Naive thymus-derived CD4-positive, alpha-beta T cell (primary cell): ENCODE measurements at regions of chrX and their contacts with region 1.

Region 1: DNA sequence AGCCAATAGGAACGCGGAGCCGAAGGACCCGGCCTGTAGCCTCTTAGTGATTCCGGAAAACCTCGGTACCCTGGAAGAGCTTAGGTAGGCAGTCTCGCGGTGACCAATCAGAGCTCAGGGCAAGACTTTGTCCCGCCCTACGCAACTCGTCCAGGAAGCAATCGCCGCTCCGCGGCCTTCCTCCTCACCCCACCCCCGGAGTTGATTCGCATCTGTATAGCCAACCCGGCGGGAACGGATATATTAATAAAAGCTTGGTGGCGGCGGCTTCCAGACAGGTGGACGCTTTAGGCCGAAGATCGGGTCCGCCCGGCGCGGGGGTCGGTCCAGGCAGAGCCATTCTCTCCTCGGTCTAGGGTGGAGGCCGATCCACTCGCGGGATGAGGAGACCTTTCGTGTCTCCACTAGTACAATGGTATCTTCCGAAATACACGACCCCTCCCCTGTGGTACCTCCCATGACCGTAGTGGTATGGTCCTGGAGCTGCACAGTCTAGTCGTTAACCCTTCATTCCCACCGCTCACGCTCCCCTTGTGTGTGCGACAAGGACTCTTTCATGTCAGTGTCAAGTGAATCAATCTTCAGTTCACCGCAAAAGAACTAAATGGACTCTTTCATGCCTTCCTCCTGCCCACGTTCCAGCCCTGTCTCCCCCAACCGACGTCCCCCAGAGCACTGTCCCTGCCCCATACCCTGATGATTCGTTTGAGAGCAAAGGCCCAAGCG is 24.2 kb upstream of the GLOD5 start:
- DNase-seq: peak; percentile 55 to 94 (median 89)
- ATAC-seq: peak; percentile 98
- H3K4me3 ChIP-seq: peak overlapping the region; percentile 81
- H3K4me3 Mint-ChIP-seq: peak overlapping the region; percentile 79 to 98 (median 94)
- H3K27ac ChIP-seq: peak overlapping the region; percentile 91
- H3K27ac Mint-ChIP-seq: peak overlapping the region; percentile 90 to 99 (median 96)
- H3K4me1 ChIP-seq: peaks cover 12 to 14% of the 10 kb centered on the region in 2 donors
- H3K4me1 Mint-ChIP-seq: peaks cover 8 to 31% (median 24%) of the 10 kb centered on the region in 7 donors
- H3K27me3 ChIP-seq: no peaks in the 10 kb centered on the region
- H3K27me3 Mint-ChIP-seq: no peaks in the 10 kb centered on the region

Region 2: DNA sequence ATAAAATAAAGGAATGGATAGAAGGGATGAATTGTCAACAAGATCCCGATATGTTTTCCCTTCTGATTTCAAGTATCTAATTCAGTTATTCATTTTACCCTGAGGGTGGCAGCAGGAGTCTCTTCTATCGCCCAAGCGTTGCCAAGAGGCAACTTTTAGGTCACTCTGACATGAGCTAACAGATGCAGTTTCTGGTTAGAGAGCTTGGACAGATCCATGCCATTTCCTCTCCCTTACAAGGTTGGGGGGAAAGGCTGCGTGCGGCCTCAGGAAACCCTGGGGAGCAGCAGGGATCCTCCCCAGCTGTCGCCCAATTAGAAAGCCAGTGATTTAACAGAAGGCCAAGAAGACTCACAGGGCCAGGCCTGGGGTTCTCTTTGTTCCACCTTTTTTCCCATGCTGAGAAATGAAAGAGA is 89.0 kb before region 1 on chrX:
- CTCF ChIA-PET with region 1: interaction called, 3 read pairs
- POLR2A ChIA-PET with region 1: interaction called, 6 read pairs
- intact Hi-C with region 1: loop called in 1 of 2 experiments (anchors 1 kb)
- DNase-seq: peak in 8 of 9 donors; percentile 17 to 54 (median 38)
- ATAC-seq: peak; percentile 70
- H3K4me3 ChIP-seq: no peak overlapping the region
- H3K4me3 Mint-ChIP-seq: no peak overlapping the region
- H3K27ac ChIP-seq: no peak overlapping the region
- H3K27ac Mint-ChIP-seq: peak overlapping the region in 3 of 9 donors; percentile 42 to 58 (median 53)
- H3K4me1 ChIP-seq: no peaks in the 10 kb centered on the region
- H3K4me1 Mint-ChIP-seq: peaks cover 0 to 18% (median 13%) of the 10 kb centered on the region in 7 donors
- H3K27me3 ChIP-seq: no peaks in the 10 kb centered on the region
- H3K27me3 Mint-ChIP-seq: no peaks in the 10 kb centered on the region

Region 3: DNA sequence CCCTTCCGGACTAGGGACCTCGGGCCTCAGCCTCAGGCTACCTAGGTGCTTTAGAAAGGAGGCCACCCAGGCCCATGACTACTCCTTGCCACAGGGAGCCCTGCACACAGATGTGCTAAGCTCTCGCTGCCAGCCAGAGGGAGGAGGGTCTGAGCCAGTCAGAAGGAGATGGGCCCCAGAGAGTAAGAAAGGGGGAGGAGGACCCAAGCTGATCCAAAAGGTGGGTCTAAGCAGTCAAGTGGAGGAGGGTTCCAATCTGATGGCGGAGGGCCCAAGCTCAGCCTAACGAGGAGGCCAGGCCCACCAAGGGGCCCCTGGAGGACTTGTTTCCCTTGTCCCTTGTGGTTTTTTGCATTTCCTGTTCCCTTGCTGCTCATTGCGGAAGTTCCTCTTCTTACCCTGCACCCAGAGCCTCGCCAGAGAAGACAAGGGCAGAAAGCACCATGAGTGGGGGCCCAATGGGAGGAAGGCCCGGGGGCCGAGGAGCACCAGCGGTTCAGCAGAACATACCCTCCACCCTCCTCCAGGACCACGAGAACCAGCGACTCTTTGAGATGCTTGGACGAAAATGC is 53.9 kb before region 1 on chrX and contains the start of gene WAS:
- CTCF ChIA-PET with region 1: no interaction called
- POLR2A ChIA-PET with region 1: interaction called, 25 read pairs
- intact Hi-C with region 1: loop called in 1 of 2 experiments (anchors 1 kb)
- DNase-seq: peak in 8 of 9 donors; percentile 35 to 63 (median 54)
- ATAC-seq: peak; percentile 85
- H3K4me3 ChIP-seq: peak within 1 kb of the TSS; percentile 82
- H3K4me3 Mint-ChIP-seq: peak within 1 kb of the TSS; percentile 84 to 98 (median 91)
- H3K27ac ChIP-seq: peak within 1 kb of the TSS; percentile 76
- H3K27ac Mint-ChIP-seq: peak within 1 kb of the TSS; percentile 87 to 97 (median 95)
- H3K4me1 ChIP-seq: peaks cover 25 to 36% of the 10 kb centered on the region in 2 donors
- H3K4me1 Mint-ChIP-seq: peaks cover 33 to 69% (median 54%) of the 10 kb centered on the region in 7 donors
- H3K27me3 ChIP-seq: no peaks in the 10 kb centered on the region
- H3K27me3 Mint-ChIP-seq: no peaks in the 10 kb centered on the region
- total RNA-seq, gene WAS: 92.2 to 164 (median 105) TPM

Region 4: GRCh38 chrX:48715072-48715471 is 22.3 kb before region 1 on chrX:
- CTCF ChIA-PET with region 1: interaction called, 3 read pairs
- POLR2A ChIA-PET with region 1: interaction called, 30 read pairs
- intact Hi-C with region 1: loop called (anchors 1 kb)
- DNase-seq: no peak
- ATAC-seq: no peak
- H3K4me3 ChIP-seq: no peak overlapping the region
- H3K4me3 Mint-ChIP-seq: peak overlapping the region in 8 of 10 donors; percentile 14 to 96 (median 76)
- H3K27ac ChIP-seq: peak overlapping the region; percentile 49
- H3K27ac Mint-ChIP-seq: peak overlapping the region; percentile 6 to 97 (median 90)
- H3K4me1 ChIP-seq: peaks cover 63 to 69% of the 10 kb centered on the region in 2 donors
- H3K4me1 Mint-ChIP-seq: peaks cover 65 to 84% (median 82%) of the 10 kb centered on the region in 7 donors
- H3K27me3 ChIP-seq: no peaks in the 10 kb centered on the region
- H3K27me3 Mint-ChIP-seq: peaks cover 0 to 2% (median 0%) of the 10 kb centered on the region in 5 donors

Region 5: DNA sequence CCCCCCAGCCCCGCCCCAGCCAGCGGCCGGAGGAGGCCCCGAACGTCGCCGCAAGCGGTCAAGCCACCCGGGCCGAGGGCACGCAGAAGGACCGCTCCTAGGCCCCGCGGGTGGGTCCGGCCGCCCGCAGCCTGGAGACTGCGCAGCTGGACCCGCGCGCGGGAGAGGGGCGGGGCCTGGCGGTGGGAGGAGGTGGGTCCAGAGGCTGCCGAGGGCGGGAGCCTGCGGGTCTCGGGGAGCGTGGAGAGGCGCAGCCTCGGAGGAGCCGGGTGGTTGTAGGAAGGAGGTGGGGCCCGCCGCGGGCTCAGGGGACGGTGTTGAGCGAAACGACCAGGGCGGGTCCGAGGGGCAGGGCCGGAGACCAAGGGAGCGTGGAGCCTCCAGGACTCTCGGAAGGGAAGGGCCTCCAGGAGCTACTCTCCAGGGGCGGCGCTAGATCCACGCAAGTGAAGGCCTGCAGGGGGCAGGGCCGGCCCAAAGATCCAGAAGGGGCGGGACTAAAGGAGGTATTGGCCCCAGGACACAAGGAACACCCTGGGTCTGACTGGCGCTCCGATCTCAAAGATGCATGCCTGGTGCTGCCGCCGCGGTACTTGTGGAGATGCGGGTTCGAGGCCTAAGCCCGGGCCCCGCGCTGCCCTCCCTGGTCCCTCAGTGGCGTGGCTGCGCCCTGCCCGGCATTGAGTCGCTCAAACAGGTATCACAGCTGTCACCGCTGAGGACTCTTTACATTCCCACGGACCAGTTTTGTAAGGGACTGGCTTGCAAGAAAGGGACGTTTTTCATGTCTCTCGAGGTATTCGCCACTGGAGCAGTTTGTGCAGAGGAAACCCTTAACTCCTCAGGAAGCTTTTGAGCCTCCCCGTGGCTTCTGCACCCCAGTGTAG is 154.3 kb after region 1 on chrX:
- CTCF ChIA-PET with region 1: interaction called, 3 read pairs
- POLR2A ChIA-PET with region 1: interaction called, 3 read pairs
- intact Hi-C with region 1: loop called in 1 of 2 experiments (anchors 1 kb)
- DNase-seq: peak; percentile 61 to 79 (median 75)
- ATAC-seq: peak; percentile 94
- H3K4me3 ChIP-seq: peak overlapping the region; percentile 53
- H3K4me3 Mint-ChIP-seq: peak overlapping the region; percentile 70 to 98 (median 86)
- H3K27ac ChIP-seq: peak overlapping the region; percentile 81
- H3K27ac Mint-ChIP-seq: peak overlapping the region in 8 of 9 donors; percentile 14 to 82 (median 64)
- H3K4me1 ChIP-seq: peaks cover 7 to 8% of the 10 kb centered on the region in 2 donors
- H3K4me1 Mint-ChIP-seq: peaks cover 12 to 31% (median 20%) of the 10 kb centered on the region in 7 donors
- H3K27me3 ChIP-seq: no peaks in the 10 kb centered on the region
- H3K27me3 Mint-ChIP-seq: no peaks in the 10 kb centered on the region

Region 6: DNA sequence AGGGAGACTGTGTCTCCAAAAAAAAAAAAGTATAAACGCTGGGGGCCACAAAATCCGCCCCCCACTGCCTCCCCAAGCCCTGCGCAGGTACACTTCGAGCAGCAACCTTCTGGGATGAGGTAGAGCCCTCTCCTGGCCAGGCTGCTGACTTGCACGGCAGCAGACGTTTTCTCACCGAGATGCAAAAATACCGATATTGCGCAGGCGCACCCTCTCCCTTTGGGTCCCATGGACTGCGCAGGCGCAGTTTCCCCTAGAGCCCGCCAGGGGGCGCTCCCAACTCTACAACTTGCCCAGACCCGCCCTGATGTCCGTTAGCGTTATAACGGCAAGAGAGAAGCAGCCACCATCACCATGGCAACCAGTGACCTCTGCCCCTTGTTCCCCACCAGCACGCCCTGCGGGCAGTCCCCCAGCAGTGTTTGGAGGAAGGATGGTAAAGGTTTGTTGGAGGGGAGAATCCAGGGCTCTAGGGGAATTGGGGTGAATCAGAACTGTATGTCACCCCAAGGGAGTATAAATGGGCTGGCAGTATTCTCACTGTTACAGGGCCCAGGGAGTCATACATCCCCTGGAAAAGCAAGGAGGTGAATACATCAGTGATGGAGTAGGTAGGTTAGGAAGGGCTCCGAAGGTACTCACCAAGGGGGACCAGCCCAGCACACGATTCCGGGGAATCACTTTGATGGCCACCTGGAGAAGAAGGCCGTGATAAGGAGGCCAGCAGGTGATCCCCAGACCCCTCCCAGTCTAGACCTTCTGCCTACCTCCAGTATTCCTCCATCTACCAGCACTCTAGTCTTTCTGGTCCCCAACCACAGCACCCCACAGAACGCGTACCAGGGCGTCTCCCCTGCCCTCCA is 180.0 kb after region 1 on chrX:
- CTCF ChIA-PET with region 1: no interaction called
- POLR2A ChIA-PET with region 1: interaction called, 4 read pairs
- intact Hi-C with region 1: loop called in 1 of 2 experiments (anchors 1 kb)
- DNase-seq: peak; percentile 73 to 92 (median 88)
- ATAC-seq: peak; percentile 65
- H3K4me3 ChIP-seq: peak overlapping the region; percentile 75
- H3K4me3 Mint-ChIP-seq: peak overlapping the region; percentile 87 to 99 (median 96)
- H3K27ac ChIP-seq: peak overlapping the region; percentile 95
- H3K27ac Mint-ChIP-seq: peak overlapping the region; percentile 89 to 99 (median 96)
- H3K4me1 ChIP-seq: peaks cover 46 to 49% of the 10 kb centered on the region in 2 donors
- H3K4me1 Mint-ChIP-seq: peaks cover 11 to 82% (median 48%) of the 10 kb centered on the region in 7 donors
- H3K27me3 ChIP-seq: no peaks in the 10 kb centered on the region
- H3K27me3 Mint-ChIP-seq: peaks cover 0 to 5% (median 0%) of the 10 kb centered on the region in 5 donors

Region 7: DNA sequence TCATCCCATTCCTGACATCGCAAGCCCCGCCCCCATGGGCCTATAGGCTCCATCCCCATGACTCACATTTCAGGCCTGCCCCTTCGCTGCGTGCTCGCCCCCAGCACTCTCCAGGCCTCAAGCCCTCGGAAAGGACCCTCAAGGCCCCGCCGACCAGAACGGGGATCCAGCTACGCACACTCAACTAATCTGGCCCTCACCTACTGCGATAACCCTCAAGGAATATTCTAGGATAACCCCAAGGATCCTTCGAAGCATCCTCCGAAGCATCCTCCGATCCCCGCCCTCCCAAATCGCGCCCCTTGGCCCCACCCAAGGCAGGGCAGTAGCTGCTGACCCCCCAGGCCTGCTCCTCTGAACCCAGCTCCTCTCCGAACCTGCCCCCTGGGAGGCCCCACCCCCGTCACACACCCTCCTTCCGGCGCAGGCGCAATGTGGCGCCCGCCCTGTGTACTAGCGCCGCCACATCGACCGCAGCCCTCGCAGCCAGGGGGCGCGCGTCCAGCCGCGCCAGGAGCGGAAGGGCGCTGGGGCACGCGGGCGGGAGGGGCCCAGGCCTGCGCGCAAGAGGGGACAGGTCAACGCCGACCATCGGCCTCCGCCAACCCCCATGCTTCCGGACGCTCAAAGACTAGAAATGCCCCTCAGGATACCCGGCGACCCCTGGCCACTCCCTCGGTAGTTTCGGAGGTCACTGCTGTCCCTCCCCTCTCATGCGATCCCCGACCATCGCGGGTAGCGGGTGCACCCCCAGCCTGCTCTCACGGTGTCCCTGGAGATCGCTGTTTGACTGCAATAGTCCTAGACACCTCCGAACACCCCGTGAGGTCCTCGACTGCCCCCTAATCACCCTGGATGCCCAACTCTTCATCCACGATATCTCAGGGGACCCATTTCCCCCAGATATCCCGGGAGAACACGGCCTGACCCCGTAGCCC is 418.8 kb after region 1 on chrX:
- CTCF ChIA-PET with region 1: no interaction called
- POLR2A ChIA-PET with region 1: no interaction called
- intact Hi-C with region 1: no loop called
- DNase-seq: peak; percentile 75 to 87 (median 85)
- ATAC-seq: peak; percentile 97
- H3K4me3 ChIP-seq: peak overlapping the region; percentile 74
- H3K4me3 Mint-ChIP-seq: peak overlapping the region; percentile 93 to 99 (median 97)
- H3K27ac ChIP-seq: peak overlapping the region; percentile 91
- H3K27ac Mint-ChIP-seq: peak overlapping the region; percentile 89 to 99 (median 96)
- H3K4me1 ChIP-seq: peaks cover 0 to 6% of the 10 kb centered on the region in 2 donors
- H3K4me1 Mint-ChIP-seq: peaks cover 7 to 21% (median 13%) of the 10 kb centered on the region in 7 donors
- H3K27me3 ChIP-seq: no peaks in the 10 kb centered on the region
- H3K27me3 Mint-ChIP-seq: peaks cover 0 to 2% (median 0%) of the 10 kb centered on the region in 5 donors